A673 (cell line): ENCODE measurements at regions of chr22 and their contacts with region 1.

Region 1: GRCh38 chr22:47050401-47051051 is 288.1 kb downstream of the TBC1D22A start:
- DNase-seq: no peak
- H3K4me3 ChIP-seq: no peak overlapping the region
- H3K27ac ChIP-seq: no peak overlapping the region
- H3K4me1 ChIP-seq: no peaks in the 10 kb centered on the region
- H3K27me3 ChIP-seq: no peaks in the 10 kb centered on the region
- CTCF ChIP-seq: no peak

Region 2: DNA sequence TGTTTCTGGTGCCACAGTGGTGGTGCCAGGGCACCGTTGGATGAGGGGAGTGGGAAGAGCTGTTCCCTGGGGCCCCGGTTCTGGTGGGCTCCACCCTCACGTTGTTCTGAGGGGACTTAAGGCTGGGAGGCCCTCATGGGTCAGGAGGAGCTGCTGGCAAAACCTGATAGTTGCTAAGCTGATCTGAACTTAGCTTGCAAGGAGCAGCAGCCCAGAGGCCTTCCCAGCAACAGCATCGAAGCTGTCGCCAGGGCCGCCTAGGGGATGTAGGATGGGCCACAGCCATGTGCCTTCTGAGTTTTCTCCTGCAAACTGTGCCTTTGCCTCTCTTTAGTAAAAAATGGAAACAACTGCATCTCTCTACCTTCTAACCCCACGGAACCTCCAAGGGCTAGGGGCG is 47.8 kb before region 1 on chr22:
- CTCF ChIA-PET with region 1: no interaction called
- POLR2A ChIA-PET with region 1: interaction called, 20 read pairs
- intact Hi-C with region 1: no loop called
- DNase-seq: no peak
- H3K4me3 ChIP-seq: no peak overlapping the region
- H3K27ac ChIP-seq: no peak overlapping the region
- H3K4me1 ChIP-seq: no peaks in the 10 kb centered on the region
- H3K27me3 ChIP-seq: no peaks in the 10 kb centered on the region
- CTCF ChIP-seq: no peak